ENCODE measurements at regions of chr2 and their contacts with region 1.

Region 1: GRCh38 chr2:237474931-237475703 is 11.9 kb upstream of the MLPH start:
- DNase-seq: peak; percentile 48 to 85 (median 75)
- ATAC-seq: peak; percentile 89
- H3K4me3 ChIP-seq: peak overlapping the region; percentile 71
- H3K4me3 Mint-ChIP-seq: peak overlapping the region; percentile 84 to 92 (median 87)
- H3K27ac ChIP-seq: peak overlapping the region; percentile 77
- H3K27ac Mint-ChIP-seq: peak overlapping the region; percentile 81 to 92 (median 87)
- H3K4me1 ChIP-seq: peaks cover 5 to 11% of the 10 kb centered on the region in 2 donors
- H3K4me1 Mint-ChIP-seq: peaks cover 7 to 22% (median 16%) of the 10 kb centered on the region in 7 donors
- H3K27me3 ChIP-seq: no peaks in the 10 kb centered on the region
- H3K27me3 Mint-ChIP-seq: peaks cover 11 to 29% (median 15%) of the 10 kb centered on the region in 5 donors

Region 2: GRCh38 chr2:236642584-236643291 is 832.4 kb before region 1 on chr2:
- CTCF ChIA-PET with region 1: no interaction called
- POLR2A ChIA-PET with region 1: no interaction called
- intact Hi-C with region 1: no loop called
- DNase-seq: no peak
- ATAC-seq: no peak
- H3K4me3 ChIP-seq: no peak overlapping the region
- H3K4me3 Mint-ChIP-seq: no peak overlapping the region
- H3K27ac ChIP-seq: no peak overlapping the region
- H3K27ac Mint-ChIP-seq: no peak overlapping the region
- H3K4me1 ChIP-seq: no peaks in the 10 kb centered on the region
- H3K4me1 Mint-ChIP-seq: no peaks in the 10 kb centered on the region
- H3K27me3 ChIP-seq: no peaks in the 10 kb centered on the region
- H3K27me3 Mint-ChIP-seq: peaks cover 11 to 43% (median 18%) of the 10 kb centered on the region in 5 donors

Region 3: GRCh38 chr2:237085248-237086221 is 389.6 kb before region 1 on chr2 and contains the start of gene COPS8:
- CTCF ChIA-PET with region 1: no interaction called
- POLR2A ChIA-PET with region 1: interaction called, 3 read pairs
- intact Hi-C with region 1: loop called (anchors 1 to 2 kb)
- DNase-seq: peak; percentile 82 to 93 (median 89)
- ATAC-seq: peak; percentile 99
- H3K4me3 ChIP-seq: peak within 1 kb of the TSS; percentile 95
- H3K4me3 Mint-ChIP-seq: peak within 1 kb of the TSS; percentile 95 to 100 (median 99)
- H3K27ac ChIP-seq: peak within 1 kb of the TSS; percentile 83
- H3K27ac Mint-ChIP-seq: peak within 1 kb of the TSS; percentile 94 to 99 (median 99)
- H3K4me1 ChIP-seq: peaks cover 8 to 15% of the 10 kb centered on the region in 2 donors
- H3K4me1 Mint-ChIP-seq: peaks cover 23 to 52% (median 28%) of the 10 kb centered on the region in 7 donors
- H3K27me3 ChIP-seq: no peaks in the 10 kb centered on the region
- H3K27me3 Mint-ChIP-seq: no peaks in the 10 kb centered on the region
- total RNA-seq, gene COPS8: 31.2 to 46.4 (median 40.8) TPM

Region 4: GRCh38 chr2:237154082-237154638 is 321.0 kb before region 1 on chr2:
- CTCF ChIA-PET with region 1: interaction called, 19 read pairs
- POLR2A ChIA-PET with region 1: interaction called, 3 read pairs
- intact Hi-C with region 1: loop called (anchors 1 kb)
- DNase-seq: peak; percentile 21 to 74 (median 60)
- ATAC-seq: peak; percentile 72
- H3K4me3 ChIP-seq: no peak overlapping the region
- H3K4me3 Mint-ChIP-seq: no peak overlapping the region
- H3K27ac ChIP-seq: no peak overlapping the region
- H3K27ac Mint-ChIP-seq: no peak overlapping the region
- H3K4me1 ChIP-seq: no peaks in the 10 kb centered on the region
- H3K4me1 Mint-ChIP-seq: peaks cover 0 to 23% (median 8%) of the 10 kb centered on the region in 7 donors
- H3K27me3 ChIP-seq: no peaks in the 10 kb centered on the region
- H3K27me3 Mint-ChIP-seq: no peaks in the 10 kb centered on the region

Region 5: DNA sequence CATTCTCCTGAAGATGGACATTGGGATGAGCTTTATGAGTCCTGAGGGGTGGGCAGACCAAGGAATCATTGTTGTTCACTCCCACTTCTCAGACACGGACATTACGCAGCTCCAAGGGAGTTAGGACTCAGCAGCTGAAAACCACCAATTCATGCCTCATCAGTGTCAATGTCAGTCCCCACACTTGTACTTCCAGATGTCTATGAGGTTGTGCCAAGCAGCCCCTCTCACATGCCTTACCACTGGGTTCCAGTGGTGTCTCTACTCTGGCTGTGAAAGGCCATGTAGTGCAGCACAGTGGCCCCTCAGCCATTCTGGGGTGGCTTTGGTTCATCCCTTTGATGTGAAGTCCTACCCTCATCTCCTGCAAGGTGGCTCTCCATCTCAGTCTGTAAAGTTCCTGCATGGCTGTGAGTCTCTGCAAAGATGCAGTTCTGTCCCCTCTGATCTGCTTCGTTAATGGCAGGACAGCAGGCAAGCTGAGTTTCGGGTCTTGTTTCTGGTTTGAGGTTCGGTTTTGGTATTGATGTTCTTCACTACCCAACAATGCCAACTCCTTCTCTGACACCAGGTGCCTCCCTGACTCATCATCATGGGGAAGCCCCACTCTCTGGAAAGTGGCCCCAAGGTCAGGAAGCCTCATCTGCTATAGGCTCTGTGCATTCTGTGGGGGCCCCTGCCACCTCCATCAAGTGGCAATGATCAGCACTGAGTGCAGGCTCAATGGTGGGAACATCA is 47.2 kb before region 1 on chr2:
- CTCF ChIA-PET with region 1: interaction called, 147 read pairs
- POLR2A ChIA-PET with region 1: interaction called, 35 read pairs
- intact Hi-C with region 1: loop called in 1 of 2 experiments (anchors 2 kb)
- DNase-seq: peak in 3 of 9 donors; percentile 4 to 73 (median 63)
- ATAC-seq: peak; percentile 42
- H3K4me3 ChIP-seq: no peak overlapping the region
- H3K4me3 Mint-ChIP-seq: peak overlapping the region in 8 of 10 donors; percentile 56 to 78 (median 66)
- H3K27ac ChIP-seq: no peak overlapping the region
- H3K27ac Mint-ChIP-seq: peak overlapping the region; percentile 11 to 96 (median 88)
- H3K4me1 ChIP-seq: peaks cover 26 to 52% of the 10 kb centered on the region in 2 donors
- H3K4me1 Mint-ChIP-seq: peaks cover 46 to 95% (median 91%) of the 10 kb centered on the region in 7 donors
- H3K27me3 ChIP-seq: no peaks in the 10 kb centered on the region
- H3K27me3 Mint-ChIP-seq: peaks cover 0 to 3% (median 0%) of the 10 kb centered on the region in 5 donors

Region 6: DNA sequence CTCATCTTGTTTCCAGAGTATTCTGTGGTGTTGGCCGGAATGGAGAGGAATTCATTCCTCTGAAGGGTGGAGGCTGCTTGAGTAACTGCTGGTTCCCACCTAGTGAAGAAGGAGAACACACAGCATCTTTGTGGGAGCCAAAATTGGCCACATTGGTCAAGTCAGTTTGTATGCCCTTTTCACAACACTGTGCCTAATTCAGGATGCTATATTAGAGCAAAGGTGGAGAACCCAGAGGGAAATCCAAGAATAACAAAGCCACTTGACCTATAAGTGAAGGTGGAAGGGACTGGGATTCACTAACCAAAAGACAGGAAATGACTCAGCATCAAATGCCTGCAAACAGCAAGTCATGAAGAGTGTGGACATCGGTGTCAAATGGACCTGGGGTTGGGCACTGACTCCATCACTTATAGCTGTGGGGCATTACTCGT is 15.4 kb before region 1 on chr2:
- CTCF ChIA-PET with region 1: interaction called, 11 read pairs
- POLR2A ChIA-PET with region 1: no interaction called
- intact Hi-C with region 1: no loop called
- DNase-seq: no peak
- ATAC-seq: no peak
- H3K4me3 ChIP-seq: no peak overlapping the region
- H3K4me3 Mint-ChIP-seq: no peak overlapping the region
- H3K27ac ChIP-seq: no peak overlapping the region
- H3K27ac Mint-ChIP-seq: no peak overlapping the region
- H3K4me1 ChIP-seq: peaks cover 0 to 8% of the 10 kb centered on the region in 2 donors
- H3K4me1 Mint-ChIP-seq: peaks cover 9 to 24% (median 13%) of the 10 kb centered on the region in 7 donors
- H3K27me3 ChIP-seq: no peaks in the 10 kb centered on the region
- H3K27me3 Mint-ChIP-seq: no peaks in the 10 kb centered on the region